ENCODE measurements at regions of chr11 and their contacts with region 1.

Region 1: GRCh38 chr11:83671289-83671688 is 385.1 kb upstream of the CCDC90B start:
- DNase-seq: no peak
- ATAC-seq: no peak
- H3K4me3 Mint-ChIP-seq: no peak overlapping the region
- H3K27ac Mint-ChIP-seq: no peak overlapping the region
- H3K4me1 Mint-ChIP-seq: no peaks in the 10 kb centered on the region
- H3K27me3 Mint-ChIP-seq: peaks cover 10% of the 10 kb centered on the region
- CTCF ChIP-seq: no peak

Region 2: DNA sequence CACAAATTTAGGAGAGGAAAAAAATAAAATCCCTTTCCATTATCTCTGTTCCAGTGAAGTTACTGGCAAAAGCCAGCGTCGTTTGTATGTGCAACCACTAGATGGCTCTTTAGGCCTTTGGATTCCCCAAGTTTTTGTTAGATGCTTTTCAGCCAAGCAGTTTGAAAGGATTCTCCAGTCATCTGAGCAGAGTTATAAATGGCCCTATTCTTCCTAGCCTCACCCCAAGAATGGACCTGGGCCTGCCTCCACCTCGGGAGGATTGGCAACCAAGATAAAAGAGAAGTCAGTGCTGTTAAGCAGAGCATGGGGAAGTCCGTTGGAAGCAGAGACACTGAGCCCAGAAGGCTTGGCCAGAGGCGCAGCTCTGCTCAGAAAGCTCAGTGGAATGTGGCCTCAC is 953.0 kb before region 1 on chr11:
- CTCF ChIA-PET with region 1: no interaction called
- POLR2A ChIA-PET with region 1: no interaction called
- intact Hi-C with region 1: loop called (anchors 1 kb)
- DNase-seq: no peak
- ATAC-seq: no peak
- H3K4me3 Mint-ChIP-seq: no peak overlapping the region
- H3K27ac Mint-ChIP-seq: no peak overlapping the region
- H3K4me1 Mint-ChIP-seq: no peaks in the 10 kb centered on the region
- H3K27me3 Mint-ChIP-seq: peaks cover 6% of the 10 kb centered on the region
- CTCF ChIP-seq: peak; percentile 36